ENCODE measurements at regions of chr12 and their contacts with region 1.

Region 1: GRCh38 chr12:128069359-128069997 is 197.5 kb upstream of the TMEM132C start:
- DNase-seq: peak; percentile 32
- ATAC-seq: peak; percentile 53; the same call in 1 of the 2 replicates
- H3K4me3 ChIP-seq: no peak overlapping the region
- H3K27ac ChIP-seq: no peak overlapping the region
- H3K4me1 ChIP-seq: no peaks in the 10 kb centered on the region
- H3K27me3 ChIP-seq: no peaks in the 10 kb centered on the region
- CTCF ChIP-seq: peak; percentile 82

Region 2: DNA sequence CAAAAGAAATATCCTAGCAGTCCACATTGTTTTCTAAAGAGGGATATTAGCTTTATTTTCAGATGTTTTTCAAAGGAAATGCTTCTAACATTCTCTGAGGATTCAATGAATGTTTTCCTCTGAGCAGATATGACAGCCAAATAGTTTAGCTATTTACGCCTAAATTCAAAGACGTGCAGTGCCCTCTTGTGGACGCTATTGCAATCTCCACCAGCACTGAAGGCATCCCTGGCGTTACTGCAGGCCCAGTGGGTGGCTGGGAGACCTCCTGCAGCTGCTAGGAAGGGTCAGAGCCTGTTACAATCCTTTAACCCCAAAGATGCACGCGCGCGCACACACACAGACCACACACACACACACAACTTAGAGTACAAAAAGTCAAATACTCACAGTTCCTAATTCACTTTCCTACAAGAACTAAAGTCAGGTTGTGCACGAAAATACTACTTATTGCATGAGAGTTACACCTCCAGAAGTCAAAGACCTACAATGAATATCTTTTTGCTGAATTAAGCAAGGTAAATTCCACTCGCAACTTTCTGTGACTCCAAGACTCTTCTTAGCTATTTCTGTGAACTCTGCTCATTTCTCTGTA is 391.8 kb before region 1 on chr12:
- CTCF ChIA-PET with region 1: no interaction called
- POLR2A ChIA-PET with region 1: no interaction called
- in situ Hi-C with region 1: no loop called
- intact Hi-C with region 1: loop called (anchors 5 kb)
- DNase-seq: peak; percentile 24
- ATAC-seq: peak; percentile 84
- H3K4me3 ChIP-seq: no peak overlapping the region
- H3K27ac ChIP-seq: no peak overlapping the region
- H3K4me1 ChIP-seq: no peaks in the 10 kb centered on the region
- H3K27me3 ChIP-seq: no peaks in the 10 kb centered on the region
- CTCF ChIP-seq: peak; percentile 86

Region 3: DNA sequence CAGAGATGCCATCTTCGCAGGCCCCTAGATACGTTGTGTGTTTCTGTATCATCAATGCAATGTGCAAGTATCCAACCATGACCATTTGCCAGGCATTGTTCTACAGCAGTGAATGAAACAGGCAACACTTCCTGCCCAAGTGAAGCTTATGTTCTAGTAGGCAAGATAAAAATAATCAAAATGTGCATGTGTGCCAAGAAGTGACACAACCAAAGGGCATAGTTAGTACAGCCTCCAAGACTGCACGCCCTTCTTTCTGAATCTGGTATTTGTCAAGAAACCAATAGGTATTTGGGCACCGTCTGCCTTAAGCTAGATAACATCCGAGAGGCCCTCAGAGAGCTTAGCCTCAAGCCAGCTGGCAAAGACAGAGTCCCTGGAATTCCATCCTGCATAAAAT is 349.5 kb after region 1 on chr12:
- CTCF ChIA-PET with region 1: no interaction called
- POLR2A ChIA-PET with region 1: no interaction called
- in situ Hi-C with region 1: no loop called
- intact Hi-C with region 1: no loop called
- DNase-seq: no peak
- ATAC-seq: no peak
- H3K4me3 ChIP-seq: no peak overlapping the region
- H3K27ac ChIP-seq: no peak overlapping the region
- H3K4me1 ChIP-seq: no peaks in the 10 kb centered on the region
- H3K27me3 ChIP-seq: 0 out of 2 replicates have a peak, but pooled peaks cover 2% of the 10 kb centered on the region
- CTCF ChIP-seq: no peak

Region 4: DNA sequence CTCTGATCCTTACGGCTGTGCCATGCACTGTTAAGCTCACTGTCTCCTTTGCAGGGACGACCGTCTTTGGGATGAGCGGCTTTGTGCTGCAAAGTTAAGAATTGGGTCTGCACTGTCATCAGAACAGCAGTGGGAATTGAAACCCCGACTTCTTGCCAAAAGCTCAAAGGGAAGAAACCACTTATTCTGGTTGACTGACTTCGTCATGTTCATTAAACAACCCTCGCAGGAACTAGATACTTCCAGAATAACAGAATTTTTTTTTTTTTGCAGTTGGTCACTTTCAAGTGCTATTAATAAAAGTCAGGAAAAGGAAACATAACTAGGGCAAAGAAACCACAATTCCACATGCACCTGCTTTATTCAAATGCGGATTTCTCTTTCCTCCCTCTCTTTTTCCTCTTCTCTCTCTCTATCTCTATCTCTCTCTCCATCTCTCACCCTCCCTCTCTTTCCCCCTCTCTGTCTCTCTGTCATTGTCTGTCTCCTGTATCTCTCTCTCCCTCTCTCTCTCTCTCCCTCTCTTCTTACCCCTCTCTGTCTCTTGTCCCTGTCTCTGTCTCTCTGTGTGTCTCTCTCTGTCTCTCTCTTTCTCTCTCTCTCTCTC is 771.5 kb after region 1 on chr12:
- CTCF ChIA-PET with region 1: no interaction called
- POLR2A ChIA-PET with region 1: no interaction called
- in situ Hi-C with region 1: no loop called
- intact Hi-C with region 1: no loop called
- DNase-seq: no peak
- ATAC-seq: no peak
- H3K4me3 ChIP-seq: no peak overlapping the region
- H3K27ac ChIP-seq: no peak overlapping the region
- H3K4me1 ChIP-seq: no peaks in the 10 kb centered on the region
- H3K27me3 ChIP-seq: peaks cover 5% of the 10 kb centered on the region; the same call in 1 of the 2 replicates
- CTCF ChIP-seq: no peak

Measured in Panc1 (cell line).